ENCODE measurements at regions of chr5 and their contacts with region 1.

Region 1: GRCh38 chr5:138077065-138077696 is 6.7 kb upstream of the WNT8A start:
- DNase-seq: peak in 8 of 9 donors; percentile 23 to 55 (median 39)
- ATAC-seq: peak; percentile 66
- H3K4me3 ChIP-seq: no peak overlapping the region
- H3K4me3 Mint-ChIP-seq: no peak overlapping the region
- H3K27ac ChIP-seq: no peak overlapping the region
- H3K27ac Mint-ChIP-seq: no peak overlapping the region
- H3K4me1 ChIP-seq: no peaks in the 10 kb centered on the region
- H3K4me1 Mint-ChIP-seq: peaks cover 0 to 17% (median 10%) of the 10 kb centered on the region in 7 donors
- H3K27me3 ChIP-seq: no peaks in the 10 kb centered on the region
- H3K27me3 Mint-ChIP-seq: peaks cover 0 to 4% (median 0%) of the 10 kb centered on the region in 5 donors

Region 2: DNA sequence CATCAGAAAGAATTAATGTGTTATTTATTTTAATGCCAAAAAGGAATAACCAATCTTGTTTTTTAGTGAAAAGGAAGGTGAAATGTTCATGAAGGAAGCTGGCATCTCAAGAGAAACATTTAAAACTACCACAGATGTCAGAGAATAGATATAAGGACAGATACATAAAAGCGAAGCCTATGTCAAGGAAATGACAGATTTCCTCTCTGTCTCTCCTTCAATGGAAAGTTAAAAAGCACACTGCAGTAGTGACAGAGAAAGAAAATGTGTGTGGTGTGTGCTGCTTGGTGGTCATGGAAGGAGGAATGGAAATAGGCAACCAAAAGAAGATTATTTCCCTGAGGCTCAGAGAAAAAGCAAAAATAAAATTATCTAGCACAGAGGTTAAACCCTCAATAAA is 15.9 kb after region 1 on chr5:
- CTCF ChIA-PET with region 1: interaction called, 9 read pairs
- POLR2A ChIA-PET with region 1: no interaction called
- intact Hi-C with region 1: loop called in 1 of 2 experiments (anchors 2 kb)
- DNase-seq: peak in 7 of 9 donors; percentile 35 to 73 (median 62)
- ATAC-seq: peak; percentile 76
- H3K4me3 ChIP-seq: no peak overlapping the region
- H3K4me3 Mint-ChIP-seq: peak overlapping the region in 9 of 10 donors; percentile 5 to 71 (median 55)
- H3K27ac ChIP-seq: no peak overlapping the region
- H3K27ac Mint-ChIP-seq: peak overlapping the region in 8 of 9 donors; percentile 41 to 92 (median 85)
- H3K4me1 ChIP-seq: peaks cover 0 to 31% of the 10 kb centered on the region in 2 donors
- H3K4me1 Mint-ChIP-seq: peaks cover 20 to 74% (median 63%) of the 10 kb centered on the region in 7 donors
- H3K27me3 ChIP-seq: no peaks in the 10 kb centered on the region
- H3K27me3 Mint-ChIP-seq: no peaks in the 10 kb centered on the region

Region 3: DNA sequence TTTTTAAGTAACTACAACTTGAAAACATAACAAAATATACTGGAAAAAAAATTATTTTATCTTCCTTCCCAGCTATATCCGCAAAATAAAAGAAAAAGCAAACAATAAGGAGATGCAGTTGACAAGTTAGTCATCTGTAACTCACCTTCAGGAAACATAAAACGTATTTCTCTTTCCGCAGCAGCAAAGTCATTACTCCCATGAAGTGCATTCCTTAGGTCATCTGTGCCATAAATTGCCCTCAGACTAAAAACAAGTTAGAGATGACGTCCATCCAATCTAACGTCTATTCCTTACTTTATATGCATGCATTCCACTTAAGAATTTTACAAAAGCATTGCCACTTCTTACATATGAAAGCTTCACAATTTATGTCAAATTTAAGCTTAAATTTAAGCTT is 51.2 kb after region 1 on chr5:
- CTCF ChIA-PET with region 1: interaction called, 53 read pairs
- POLR2A ChIA-PET with region 1: interaction called, 10 read pairs
- intact Hi-C with region 1: loop called (anchors 1 kb)
- DNase-seq: no peak
- ATAC-seq: no peak
- H3K4me3 ChIP-seq: no peak overlapping the region
- H3K4me3 Mint-ChIP-seq: no peak overlapping the region
- H3K27ac ChIP-seq: no peak overlapping the region
- H3K27ac Mint-ChIP-seq: no peak overlapping the region
- H3K4me1 ChIP-seq: no peaks in the 10 kb centered on the region
- H3K4me1 Mint-ChIP-seq: peaks cover 0 to 2% (median 0%) of the 10 kb centered on the region in 7 donors
- H3K27me3 ChIP-seq: no peaks in the 10 kb centered on the region
- H3K27me3 Mint-ChIP-seq: peaks cover 0 to 22% (median 4%) of the 10 kb centered on the region in 5 donors

Region 4: GRCh38 chr5:138282920-138283742 is 205.9 kb after region 1 on chr5:
- CTCF ChIA-PET with region 1: no interaction called
- POLR2A ChIA-PET with region 1: no interaction called
- intact Hi-C with region 1: loop called in 1 of 2 experiments (anchors 5 kb)
- DNase-seq: no peak
- ATAC-seq: peak; percentile 36
- H3K4me3 ChIP-seq: no peak overlapping the region
- H3K4me3 Mint-ChIP-seq: no peak overlapping the region
- H3K27ac ChIP-seq: no peak overlapping the region
- H3K27ac Mint-ChIP-seq: no peak overlapping the region
- H3K4me1 ChIP-seq: no peaks in the 10 kb centered on the region
- H3K4me1 Mint-ChIP-seq: no peaks in the 10 kb centered on the region
- H3K27me3 ChIP-seq: no peaks in the 10 kb centered on the region
- H3K27me3 Mint-ChIP-seq: no peaks in the 10 kb centered on the region

Region 5: GRCh38 chr5:138503487-138504270 is 426.5 kb after region 1 on chr5:
- CTCF ChIA-PET with region 1: no interaction called
- POLR2A ChIA-PET with region 1: no interaction called
- intact Hi-C with region 1: loop called in 1 of 2 experiments (anchors 1 kb)
- DNase-seq: peak in 7 of 9 donors; percentile 30 to 60 (median 49)
- ATAC-seq: peak; percentile 82
- H3K4me3 ChIP-seq: no peak overlapping the region
- H3K4me3 Mint-ChIP-seq: no peak overlapping the region
- H3K27ac ChIP-seq: no peak overlapping the region
- H3K27ac Mint-ChIP-seq: peak overlapping the region in 3 of 9 donors; percentile 9 to 47 (median 32)
- H3K4me1 ChIP-seq: no peaks in the 10 kb centered on the region
- H3K4me1 Mint-ChIP-seq: peaks cover 0 to 5% (median 3%) of the 10 kb centered on the region in 7 donors
- H3K27me3 ChIP-seq: no peaks in the 10 kb centered on the region
- H3K27me3 Mint-ChIP-seq: no peaks in the 10 kb centered on the region

Measured in naive thymus-derived CD4-positive, alpha-beta T cell (primary cell).